ENCODE measurements at regions of chr16 and their contacts with region 1.

Region 1: DNA sequence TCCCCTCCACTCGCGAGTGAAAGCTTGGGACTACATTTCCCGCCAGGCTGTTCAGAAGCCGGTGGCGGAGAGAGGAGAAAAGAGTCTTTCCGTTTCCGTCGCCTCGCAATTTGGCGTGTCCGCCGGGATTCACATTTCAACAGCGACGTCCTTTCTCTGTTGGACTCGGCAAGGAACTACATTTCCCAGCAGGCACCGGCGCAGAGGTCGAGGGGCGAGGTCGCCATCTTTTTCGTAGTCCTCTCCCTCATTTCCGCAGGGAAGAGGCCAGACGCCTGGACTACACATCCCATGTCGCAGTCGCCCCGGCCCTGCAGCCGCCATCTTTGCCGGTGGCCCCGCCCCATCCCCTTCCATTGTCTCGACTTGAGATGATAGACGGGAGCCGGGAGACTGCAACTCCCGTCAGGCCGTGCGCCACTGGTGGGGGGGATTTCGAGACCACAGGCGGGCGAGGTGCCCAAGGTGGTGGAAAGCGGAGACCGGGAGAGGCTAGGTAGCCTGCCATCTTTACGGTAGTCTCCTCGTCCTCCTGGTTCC is 882 bp upstream of the FBXL19 start:
- DNase-seq: peak; percentile 99
- H3K4me3 ChIP-seq: peak overlapping the region; percentile 57
- H3K27me3 ChIP-seq: no peaks in the 10 kb centered on the region
- CTCF ChIP-seq: no peak

Region 2: GRCh38 chr16:30934827-30935557 is 12.5 kb after region 1 on chr16:
- CTCF ChIA-PET with region 1: interaction called, 40 read pairs
- POLR2A ChIA-PET with region 1: no interaction called
- DNase-seq: no peak
- H3K4me3 ChIP-seq: no peak overlapping the region
- H3K27me3 ChIP-seq: no peaks in the 10 kb centered on the region
- CTCF ChIP-seq: peak; percentile 58

Region 3: DNA sequence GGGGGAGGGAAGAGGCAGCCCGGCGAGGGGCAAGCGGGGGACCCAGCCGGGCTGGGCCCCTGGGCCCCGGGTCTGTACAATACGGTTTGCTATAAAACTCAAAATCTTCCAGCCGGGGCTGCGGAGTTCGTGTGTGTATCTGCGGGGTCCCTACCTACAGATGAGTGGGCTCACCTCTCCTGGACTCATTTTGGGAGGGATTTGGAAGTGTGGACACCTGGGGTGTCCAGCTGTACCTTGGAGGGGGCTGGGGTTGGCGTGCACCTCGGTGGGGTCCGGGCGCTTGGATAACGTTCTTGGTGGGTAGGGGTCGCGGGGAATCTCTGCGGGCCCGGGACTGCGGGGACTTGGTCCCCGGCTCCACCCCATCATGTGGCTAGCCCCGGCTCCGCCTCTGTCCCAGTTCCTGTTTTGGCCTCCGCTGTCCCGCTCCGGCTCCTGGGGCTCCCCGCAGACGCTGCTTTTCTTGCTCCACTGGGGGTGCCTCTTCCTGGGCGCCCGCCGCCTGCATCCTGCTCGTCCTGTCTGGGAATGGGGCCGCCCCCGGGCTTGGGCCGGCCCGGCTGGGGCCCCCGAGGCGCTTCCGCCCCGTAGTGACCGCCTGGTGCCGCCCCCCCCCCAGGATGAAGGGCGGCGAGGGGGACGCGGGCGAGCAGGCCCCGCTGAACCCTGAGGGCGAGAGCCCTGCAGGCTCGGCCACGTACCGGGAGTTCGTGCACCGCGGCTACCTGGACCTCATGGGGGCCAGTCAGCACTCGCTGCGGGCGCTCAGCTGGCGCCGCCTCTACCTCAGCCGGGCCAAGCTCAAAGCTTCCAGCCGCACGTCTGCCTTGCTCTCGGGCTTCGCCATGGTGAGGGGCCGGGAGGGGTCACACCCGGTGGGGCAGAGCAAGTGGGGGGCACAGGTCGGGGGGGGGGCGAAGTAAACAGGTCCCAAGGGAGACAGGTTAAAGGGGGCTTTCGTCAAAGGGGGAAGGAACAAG is 26.5 kb after region 1 on chr16 and contains the start of gene ORAI3:
- CTCF ChIA-PET with region 1: no interaction called
- POLR2A ChIA-PET with region 1: no interaction called
- DNase-seq: no peak
- H3K4me3 ChIP-seq: peak within 1 kb of the TSS; percentile 90
- H3K27me3 ChIP-seq: no peaks in the 10 kb centered on the region
- CTCF ChIP-seq: no peak
- polyA plus RNA-seq, gene ORAI3: 25.6 and 37.1 TPM in 2 replicates

Region 4: GRCh38 chr16:31036691-31037090 is 114.2 kb after region 1 on chr16:
- CTCF ChIA-PET with region 1: no interaction called
- POLR2A ChIA-PET with region 1: no interaction called
- DNase-seq: no peak
- H3K4me3 ChIP-seq: no peak overlapping the region
- H3K27me3 ChIP-seq: no peaks in the 10 kb centered on the region
- CTCF ChIP-seq: no peak

Region 5: DNA sequence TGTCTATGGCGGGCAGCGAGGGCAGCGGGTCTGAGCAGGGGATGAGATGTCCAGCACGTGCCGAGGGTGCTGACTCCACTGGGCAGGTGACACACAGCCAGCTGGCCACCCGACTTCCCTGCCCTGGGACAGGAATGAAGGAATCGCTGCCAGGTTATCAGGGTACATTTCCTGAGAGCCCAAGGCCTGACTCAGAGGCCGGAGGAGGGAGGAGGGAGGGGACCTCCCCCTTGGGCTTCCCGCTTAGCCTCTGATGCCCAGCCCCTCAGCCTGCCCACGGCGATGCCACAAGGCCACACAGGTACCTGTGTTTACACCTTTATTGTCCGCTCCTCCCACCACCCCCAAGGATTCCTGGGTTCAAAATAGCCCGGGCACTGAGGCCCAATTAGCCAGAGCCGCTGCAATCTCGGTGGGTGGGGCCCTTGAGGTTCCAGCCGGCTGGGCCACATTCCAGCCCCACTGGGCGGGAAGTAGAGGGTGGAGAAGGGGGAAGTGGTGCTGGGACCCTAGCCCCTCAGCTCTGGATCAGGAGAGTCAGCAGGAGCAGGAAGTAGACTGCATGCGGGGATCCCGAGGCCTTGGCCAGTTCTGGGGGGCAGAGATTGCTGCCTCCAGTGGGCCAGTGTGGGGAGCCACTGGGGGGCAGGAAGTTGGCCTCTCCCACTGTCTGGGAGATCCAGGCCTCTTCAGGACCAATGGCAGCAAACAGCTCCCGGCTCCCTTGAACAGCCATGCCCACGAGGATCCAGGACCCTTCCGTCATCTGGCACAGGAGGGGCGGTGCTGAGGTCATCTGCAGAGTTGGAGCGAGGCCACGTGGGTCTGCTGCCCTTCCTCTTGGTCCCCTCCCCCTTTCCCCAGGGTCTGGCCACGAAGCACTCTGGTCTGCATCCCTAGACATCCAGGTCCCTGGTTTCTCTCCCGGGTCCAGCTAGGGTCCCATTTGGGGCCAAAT is 216.4 kb after region 1 on chr16:
- CTCF ChIA-PET with region 1: no interaction called
- POLR2A ChIA-PET with region 1: no interaction called
- DNase-seq: peak; percentile 4
- H3K4me3 ChIP-seq: no peak overlapping the region
- H3K27me3 ChIP-seq: no peaks in the 10 kb centered on the region
- CTCF ChIP-seq: no peak